GM18951 (cell line): ENCODE measurements at regions of chr1 and their contacts with region 1.

Region 1: GRCh38 chr1:207754974-207755689 is 3.3 kb downstream of the CD46 start:
- POLR2A ChIP-seq: no peak

Region 2: GRCh38 chr1:207565546-207566358 is 189.4 kb before region 1 on chr1:
- in situ Hi-C with region 1: no loop called
- POLR2A ChIP-seq: no peak

Region 3: DNA sequence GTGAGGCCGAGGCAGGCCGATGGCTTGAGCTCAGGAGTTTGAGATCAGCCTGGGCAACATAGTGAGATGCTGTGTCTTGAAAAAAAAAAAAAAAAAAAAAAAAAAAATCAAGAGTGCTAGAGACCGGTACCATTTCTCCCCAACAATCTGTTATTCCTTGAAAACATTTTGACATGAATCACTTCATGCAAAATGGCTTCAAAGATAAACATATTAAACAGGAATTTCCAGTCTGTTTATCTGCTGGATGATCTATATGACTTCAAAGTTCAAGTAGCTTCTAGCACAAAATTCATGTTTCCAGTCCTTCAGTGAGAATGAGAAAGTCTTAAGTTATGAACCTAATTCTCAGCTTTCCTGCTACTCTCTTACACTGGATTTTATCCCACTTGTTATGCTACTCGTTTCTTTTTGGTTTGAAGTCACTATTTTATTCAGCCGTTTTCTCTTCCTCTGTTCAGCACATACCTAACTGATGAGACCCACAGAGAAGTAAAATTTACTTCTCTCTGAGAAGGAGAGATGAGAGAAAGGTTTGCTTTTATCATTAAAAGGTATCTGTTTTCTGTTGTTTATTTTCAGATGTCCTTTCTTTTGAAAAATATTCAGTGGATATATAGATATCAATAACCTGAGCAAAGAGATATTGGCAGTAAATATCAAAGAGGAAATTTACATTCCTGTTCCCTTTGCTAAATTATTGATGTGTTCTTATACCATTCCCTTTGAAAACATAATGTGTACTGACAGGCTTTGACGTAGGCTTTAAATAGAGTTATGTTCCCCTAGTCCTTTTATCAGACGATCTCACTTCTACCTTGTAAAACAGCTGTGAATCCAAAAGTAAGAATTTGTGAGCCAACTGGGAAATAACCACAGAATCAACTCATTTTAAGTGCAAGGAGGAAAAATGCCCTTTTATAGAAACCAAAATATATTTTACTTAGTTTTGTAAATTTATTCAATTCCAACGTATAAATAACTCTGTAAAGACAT is 35.0 kb after region 1 on chr1:
- in situ Hi-C with region 1: loop called (anchors 5 kb)
- POLR2A ChIP-seq: no peak